OCI-LY7 (cell line): ENCODE measurements at regions of chr2 and their contacts with region 1.

Region 1: GRCh38 chr2:201451292-201452057 is at the starts of genes STRADB and TRAK2:
- DNase-seq: peak; percentile 96
- H3K4me3 ChIP-seq: peak within 1 kb of the TSS; percentile 99
- H3K27ac ChIP-seq: peak within 1 kb of the TSS; percentile 80
- H3K4me1 ChIP-seq: peaks cover 14% of the 10 kb centered on the region
- CTCF ChIP-seq: peak; percentile 25; the same call in 1 of the 2 replicates
- total RNA-seq, gene STRADB: 8.4 and 11.9 TPM in 2 replicates
- total RNA-seq, gene TRAK2: 4.9 and 7.1 TPM in 2 replicates

Region 2: DNA sequence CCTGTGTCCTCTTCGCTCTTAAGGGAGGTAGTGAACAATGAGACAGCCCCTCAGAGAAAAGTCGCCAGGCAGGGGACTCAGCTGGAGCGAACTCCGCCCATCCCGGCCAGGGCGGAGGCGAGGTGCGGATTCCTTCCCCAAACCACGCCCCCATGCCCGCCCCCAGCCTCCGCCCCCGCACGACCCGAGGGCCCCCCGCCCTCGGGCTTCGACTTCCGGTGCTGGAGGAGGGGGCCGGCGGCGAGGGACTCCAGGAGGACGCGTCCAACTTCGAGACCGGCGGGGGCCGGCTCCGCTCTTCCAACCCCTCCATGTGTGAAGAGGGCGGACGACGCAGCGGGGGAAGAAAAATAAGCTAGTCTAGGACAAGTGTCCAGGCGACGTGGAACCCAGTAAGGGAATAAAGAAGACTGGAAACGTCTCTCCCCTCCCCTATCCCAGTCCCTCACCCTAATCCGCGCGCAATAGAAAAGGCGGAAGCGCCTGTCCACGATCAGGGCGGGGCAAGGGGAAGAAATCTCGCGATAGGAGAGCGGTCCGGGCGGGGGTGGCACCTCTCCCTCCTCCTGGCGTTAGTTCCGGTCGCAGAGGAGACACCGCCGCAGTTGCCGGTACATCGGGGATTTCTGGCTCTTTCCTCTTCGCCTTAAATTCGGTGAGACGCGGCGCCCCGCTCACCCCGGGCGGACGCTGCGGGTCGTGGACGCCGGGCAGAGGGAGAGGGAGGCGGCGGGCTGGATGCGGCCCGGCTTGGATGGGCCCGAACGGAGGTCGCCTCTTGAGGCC is 639.9 kb before region 1 on chr2 and contains the start of gene BZW1:
- CTCF ChIA-PET with region 1: interaction called, 3 read pairs
- POLR2A ChIA-PET with region 1: no interaction called
- intact Hi-C with region 1: loop called (anchors 5 kb)
- DNase-seq: peak; percentile 98
- H3K4me3 ChIP-seq: peak within 1 kb of the TSS; percentile 93
- H3K27ac ChIP-seq: peak within 1 kb of the TSS; percentile 78
- H3K4me1 ChIP-seq: peaks cover 28% of the 10 kb centered on the region
- CTCF ChIP-seq: no peak
- total RNA-seq, gene BZW1: 177 and 180 TPM in 2 replicates

Region 3: GRCh38 chr2:201270293-201271001 is 181.0 kb before region 1 on chr2:
- CTCF ChIA-PET with region 1: no interaction called
- POLR2A ChIA-PET with region 1: no interaction called
- intact Hi-C with region 1: no loop called
- DNase-seq: no peak
- H3K4me3 ChIP-seq: no peak overlapping the region
- H3K27ac ChIP-seq: no peak overlapping the region
- H3K4me1 ChIP-seq: no peaks in the 10 kb centered on the region
- CTCF ChIP-seq: 0 out of 2 replicates have a peak, but pooled peaks have one; percentile 29

Region 4: GRCh38 chr2:201344663-201345366 is 106.7 kb before region 1 on chr2:
- CTCF ChIA-PET with region 1: no interaction called
- POLR2A ChIA-PET with region 1: interaction called, 10 read pairs
- intact Hi-C with region 1: no loop called
- DNase-seq: peak; percentile 61
- H3K4me3 ChIP-seq: no peak overlapping the region
- H3K27ac ChIP-seq: no peak overlapping the region
- H3K4me1 ChIP-seq: peaks cover 22% of the 10 kb centered on the region
- CTCF ChIP-seq: peak; percentile 43; the same call in 1 of the 2 replicates

Region 5: DNA sequence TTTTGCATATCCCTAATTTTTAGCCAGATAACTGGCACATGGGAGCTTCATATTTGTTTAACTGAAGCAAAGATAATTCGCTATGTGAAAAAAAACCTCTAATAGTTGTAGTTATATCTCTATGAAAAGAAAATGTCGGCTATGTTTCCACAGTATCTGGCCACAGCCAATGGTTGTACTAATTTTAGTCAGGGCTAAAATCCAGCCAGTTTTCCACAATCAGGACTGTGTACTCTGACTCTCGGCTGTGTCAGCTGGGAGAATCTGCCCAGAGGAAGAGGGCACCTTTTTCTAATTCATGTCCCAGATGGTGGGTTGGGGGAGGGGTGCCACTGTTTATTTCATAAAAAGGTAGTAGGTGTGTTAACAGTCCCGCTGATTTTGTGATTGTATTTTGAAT is 38.8 kb after region 1 on chr2:
- CTCF ChIA-PET with region 1: no interaction called
- POLR2A ChIA-PET with region 1: no interaction called
- intact Hi-C with region 1: no loop called
- DNase-seq: no peak
- H3K4me3 ChIP-seq: no peak overlapping the region
- H3K27ac ChIP-seq: no peak overlapping the region
- H3K4me1 ChIP-seq: no peaks in the 10 kb centered on the region
- CTCF ChIP-seq: no peak

Region 6: GRCh38 chr2:201642579-201643215 is 191.2 kb after region 1 on chr2:
- CTCF ChIA-PET with region 1: no interaction called
- POLR2A ChIA-PET with region 1: interaction called, 12 read pairs
- intact Hi-C with region 1: loop called (anchors 2 kb)
- DNase-seq: peak; percentile 88
- H3K4me3 ChIP-seq: peak overlapping the region; percentile 97
- H3K27ac ChIP-seq: peak overlapping the region; percentile 75
- H3K4me1 ChIP-seq: peaks cover 22% of the 10 kb centered on the region
- CTCF ChIP-seq: no peak

Region 7: DNA sequence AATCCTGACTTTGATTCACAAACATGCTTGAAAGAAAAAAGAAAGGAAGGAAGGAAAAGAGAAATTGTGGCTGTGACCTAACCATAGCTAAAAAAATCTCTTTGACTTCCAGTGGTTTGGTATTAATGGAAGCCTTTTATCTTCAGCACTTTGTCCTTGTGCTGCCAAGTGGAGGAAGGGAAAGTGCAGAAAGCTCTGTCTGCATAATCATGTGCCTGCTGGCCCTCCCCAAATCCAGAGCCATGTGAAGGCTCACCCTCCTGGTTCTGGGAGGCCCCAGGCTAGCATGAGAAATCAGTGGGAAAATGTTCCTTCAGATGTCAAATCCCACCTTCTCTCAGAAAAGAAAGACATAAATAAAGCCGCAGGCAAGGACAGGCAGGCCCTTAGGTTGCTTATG is 876.4 kb after region 1 on chr2:
- CTCF ChIA-PET with region 1: interaction called, 13 read pairs
- POLR2A ChIA-PET with region 1: no interaction called
- intact Hi-C with region 1: no loop called
- DNase-seq: no peak
- H3K4me3 ChIP-seq: no peak overlapping the region
- H3K27ac ChIP-seq: no peak overlapping the region
- H3K4me1 ChIP-seq: no peaks in the 10 kb centered on the region
- CTCF ChIP-seq: no peak